ENCODE measurements at regions of chr3 and their contacts with region 1.

Region 1: DNA sequence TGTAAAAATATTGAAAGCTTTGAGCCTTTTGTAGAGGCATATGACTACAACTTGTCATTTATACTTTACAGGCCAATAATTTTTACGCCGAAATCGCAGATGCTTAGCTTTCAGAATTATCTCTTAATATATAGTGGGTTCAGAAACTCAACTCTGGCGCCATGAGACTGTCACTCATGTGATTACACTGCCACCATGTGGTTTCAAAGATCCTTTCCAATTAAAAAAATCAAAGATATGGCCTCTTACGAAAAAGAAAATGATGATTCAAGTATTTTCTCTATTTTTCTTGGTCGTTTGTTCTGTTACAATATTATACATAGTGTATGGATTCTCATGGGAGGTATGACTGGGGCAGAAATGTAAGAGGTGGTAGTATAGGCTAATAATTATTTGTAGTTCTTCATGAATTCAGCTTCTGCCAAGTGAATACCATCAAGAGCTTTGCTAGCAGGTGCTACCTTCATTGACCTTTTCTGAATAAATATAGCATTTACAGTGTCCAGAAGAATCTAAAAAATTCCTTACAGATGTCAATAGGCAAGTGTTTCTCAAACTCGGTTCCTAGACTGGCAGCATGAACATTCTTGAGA is 751.7 kb upstream of the GOLIM4 start:
- DNase-seq: no peak
- H3K4me3 ChIP-seq: no peak overlapping the region
- H3K27me3 ChIP-seq: peaks cover 2% of the 10 kb centered on the region; the same call in 1 of the 2 replicates
- CTCF ChIP-seq: peak; percentile 63

Region 2: DNA sequence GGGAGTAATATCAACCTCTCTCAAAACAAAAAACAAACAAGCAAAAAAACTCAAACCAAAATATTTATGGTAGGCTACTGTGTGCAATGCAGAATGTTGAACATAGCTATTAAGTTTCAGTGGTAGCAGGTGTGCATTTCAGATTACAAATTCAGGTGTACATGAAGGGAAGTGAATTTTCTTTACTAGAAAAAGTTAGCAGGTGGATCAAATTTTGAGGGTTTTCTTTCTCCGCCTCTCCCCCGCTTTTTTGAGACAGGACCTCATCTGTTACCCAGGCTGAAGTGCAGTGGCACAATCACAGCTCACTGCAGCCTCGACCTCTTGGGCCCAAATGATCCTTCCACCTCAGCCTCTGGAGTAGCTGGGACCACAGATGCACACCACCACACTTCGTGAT is 641.9 kb before region 1 on chr3:
- CTCF ChIA-PET with region 1: interaction called, 61 read pairs
- POLR2A ChIA-PET with region 1: no interaction called
- DNase-seq: no peak
- H3K4me3 ChIP-seq: no peak overlapping the region
- H3K27me3 ChIP-seq: no peaks in the 10 kb centered on the region
- CTCF ChIP-seq: no peak

Region 3: DNA sequence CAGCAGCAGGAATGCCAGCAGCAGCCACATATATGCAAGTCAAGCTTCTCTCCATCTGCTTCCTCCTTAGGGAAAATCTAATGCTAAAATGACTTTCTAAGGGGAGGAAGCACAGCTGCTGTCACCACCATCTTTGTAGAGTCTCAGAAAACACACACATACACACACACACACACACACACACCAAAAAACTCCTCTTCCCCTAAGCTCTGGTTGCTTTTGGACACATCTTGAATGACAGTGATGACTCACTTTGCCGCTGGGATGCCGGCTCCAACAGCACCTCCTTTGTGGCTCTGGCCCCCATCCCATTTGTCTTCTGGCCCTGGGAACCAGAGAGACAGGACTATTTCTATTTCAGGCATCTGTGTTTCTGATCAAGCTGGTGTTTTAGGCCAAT is 626.8 kb before region 1 on chr3:
- CTCF ChIA-PET with region 1: interaction called, 13 read pairs
- POLR2A ChIA-PET with region 1: no interaction called
- DNase-seq: no peak
- H3K4me3 ChIP-seq: no peak overlapping the region
- H3K27me3 ChIP-seq: no peaks in the 10 kb centered on the region
- CTCF ChIP-seq: no peak

Region 4: GRCh38 chr3:168517249-168518071 is 329.9 kb before region 1 on chr3:
- CTCF ChIA-PET with region 1: interaction called, 17 read pairs
- POLR2A ChIA-PET with region 1: no interaction called
- DNase-seq: no peak
- H3K4me3 ChIP-seq: no peak overlapping the region
- H3K27me3 ChIP-seq: no peaks in the 10 kb centered on the region
- CTCF ChIP-seq: no peak

Region 5: GRCh38 chr3:168671082-168671481 is 176.3 kb before region 1 on chr3:
- CTCF ChIA-PET with region 1: no interaction called
- POLR2A ChIA-PET with region 1: no interaction called
- DNase-seq: no peak
- H3K4me3 ChIP-seq: no peak overlapping the region
- H3K27me3 ChIP-seq: no peaks in the 10 kb centered on the region
- CTCF ChIP-seq: no peak

Region 6: DNA sequence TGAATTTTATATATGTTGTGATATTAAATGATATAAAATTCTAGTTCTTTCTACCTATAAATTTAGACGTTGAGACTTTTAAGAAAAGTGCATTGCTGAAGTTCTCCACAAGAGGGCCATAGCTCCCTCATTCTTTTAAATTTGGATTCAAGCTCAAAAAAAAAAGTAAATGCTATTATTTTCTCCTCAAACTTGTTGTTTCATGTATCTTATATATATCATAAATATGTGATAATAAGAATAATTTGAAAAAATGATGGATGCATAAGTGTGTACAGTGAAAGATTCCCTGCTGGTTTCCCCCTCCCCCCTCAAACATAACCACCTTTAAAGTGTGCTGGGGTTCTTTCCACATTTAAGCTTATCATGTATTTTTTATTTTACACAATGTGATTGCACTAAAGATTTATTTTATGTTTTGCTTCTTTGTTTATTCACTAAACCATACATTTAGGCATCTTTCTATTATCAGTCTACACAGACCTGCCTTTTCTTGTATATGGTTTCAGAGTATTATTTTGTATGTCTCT is 17.7 kb after region 1 on chr3:
- CTCF ChIA-PET with region 1: interaction called, 28 read pairs
- POLR2A ChIA-PET with region 1: no interaction called
- DNase-seq: no peak
- H3K4me3 ChIP-seq: no peak overlapping the region
- H3K27me3 ChIP-seq: peaks cover 2% of the 10 kb centered on the region
- CTCF ChIP-seq: peak; percentile 80

Measured in BJ (cell line).